Left lung (tissue), 14 donors: ENCODE measurements at regions of chr7 and their contacts with region 1.

Region 1: DNA sequence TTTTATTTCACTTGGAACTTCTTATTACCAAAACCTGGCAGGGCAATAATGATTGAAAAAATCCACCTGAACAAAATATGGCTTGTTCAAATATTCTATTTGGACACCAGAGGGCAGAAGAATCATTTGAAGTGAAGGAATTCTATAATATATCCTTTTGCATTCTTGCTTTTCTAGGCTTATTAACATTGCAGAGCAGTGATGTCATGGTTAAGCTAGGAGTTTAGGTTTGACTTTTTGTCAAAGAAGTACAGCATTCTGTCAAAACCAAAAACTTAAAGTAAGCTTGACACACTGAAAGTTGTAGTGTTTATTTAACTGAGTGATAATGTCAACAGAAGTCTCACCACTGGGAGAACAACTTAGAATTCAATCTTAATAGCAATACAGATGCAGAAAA is 156.0 kb downstream of the SEMA3D start:
- DNase-seq: peak in 2 of 4 donors; percentile 32 to 53
- ATAC-seq: peak; percentile 50
- H3K4me3 ChIP-seq: no peak overlapping the region
- H3K27ac ChIP-seq: no peak overlapping the region
- H3K4me1 ChIP-seq: no peaks in the 10 kb centered on the region
- H3K27me3 ChIP-seq: no peaks in the 10 kb centered on the region
- CTCF ChIP-seq: peak in 1 of 2 donors; percentile 47

Region 2: GRCh38 chr7:84595026-84595425 is 435.9 kb before region 1 on chr7:
- intact Hi-C with region 1: no loop called
- DNase-seq: no peak
- ATAC-seq: no peak
- H3K4me3 ChIP-seq: no peak overlapping the region
- H3K27ac ChIP-seq: no peak overlapping the region
- H3K4me1 ChIP-seq: no peaks in the 10 kb centered on the region
- H3K27me3 ChIP-seq: no peaks in the 10 kb centered on the region
- CTCF ChIP-seq: no peak

Region 3: DNA sequence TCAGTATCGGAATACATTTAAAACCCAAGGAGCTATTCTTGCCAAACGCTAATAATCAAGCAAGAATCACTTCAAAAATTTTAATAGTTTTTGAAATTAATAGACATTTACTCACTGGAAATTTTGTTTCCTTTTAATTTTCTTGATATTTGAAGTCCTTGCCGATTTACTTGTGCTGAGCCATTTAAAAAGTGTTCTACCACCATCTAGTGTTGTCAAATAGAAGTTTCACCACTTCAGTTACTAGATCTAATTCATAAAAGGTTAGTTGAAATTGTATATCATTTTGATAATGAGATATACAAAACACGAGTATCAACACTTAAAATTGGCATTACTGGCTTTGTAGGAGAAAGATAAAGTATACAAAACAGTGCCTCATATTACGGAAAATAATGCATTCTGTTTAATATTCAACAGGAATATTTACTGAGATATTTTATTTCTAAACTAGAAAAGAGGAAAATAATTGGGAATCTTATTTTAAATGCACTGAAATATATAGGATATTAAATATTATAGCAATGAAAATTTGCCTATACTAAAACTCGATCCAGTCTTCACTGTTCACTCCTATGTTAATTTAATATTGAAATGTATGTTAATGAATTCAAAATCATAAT is 820.8 kb after region 1 on chr7:
- intact Hi-C with region 1: loop called in 1 of 2 experiments (anchors 10 kb)
- DNase-seq: peak in 1 of 4 donors; percentile 67
- ATAC-seq: peak; percentile 55
- H3K4me3 ChIP-seq: no peak overlapping the region
- H3K27ac ChIP-seq: no peak overlapping the region
- H3K4me1 ChIP-seq: no peaks in the 10 kb centered on the region
- H3K27me3 ChIP-seq: no peaks in the 10 kb centered on the region
- CTCF ChIP-seq: peak in 1 of 2 donors; percentile 51